ENCODE measurements at regions of chr13 and their contacts with region 1.

Region 1: DNA sequence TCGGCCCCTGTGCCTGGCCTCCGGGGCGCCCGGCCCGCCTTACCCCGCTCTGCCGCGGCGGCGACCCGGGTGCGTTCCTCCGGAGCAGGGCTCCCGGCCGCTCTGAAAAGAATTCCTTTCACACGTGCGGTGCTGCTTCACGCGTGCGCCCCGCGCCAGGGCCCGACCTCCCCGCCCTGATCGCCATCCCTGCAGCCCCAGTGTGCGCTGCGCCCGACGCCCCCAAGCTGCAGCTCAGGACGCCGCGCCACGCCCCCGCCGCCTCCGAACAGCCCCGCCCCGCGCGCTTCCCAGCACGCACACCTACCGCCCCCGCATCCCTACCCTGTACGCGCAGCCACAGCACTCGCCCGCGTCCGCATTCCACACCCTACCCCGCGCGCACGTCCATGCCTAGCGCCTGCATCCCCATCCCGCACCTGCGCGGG is at the start of gene GJA3:
- DNase-seq: peak in 4 of 5 donors; percentile 26 to 37 (median 32)
- H3K4me3 ChIP-seq: peak within 1 kb of the TSS in 1 of 2 donors; percentile 37
- H3K4me3 Mint-ChIP-seq: peak within 1 kb of the TSS; percentile 75 to 88 (median 85)
- H3K27ac ChIP-seq: no peak within 1 kb of the TSS
- H3K27ac Mint-ChIP-seq: peak within 1 kb of the TSS in 4 of 7 donors; percentile 36 to 85 (median 56)
- H3K4me1 ChIP-seq: peaks cover 19% of the 10 kb centered on the region
- H3K4me1 Mint-ChIP-seq: peaks cover 7 to 24% (median 17%) of the 10 kb centered on the region in 4 donors
- H3K27me3 ChIP-seq: peaks cover 11% of the 10 kb centered on the region
- H3K27me3 Mint-ChIP-seq: peaks cover 25 to 41% of the 10 kb centered on the region in 2 donors
- total RNA-seq, gene GJA3: 0.09 TPM in 1 of 2 experiments, not detected in the other

Region 2: DNA sequence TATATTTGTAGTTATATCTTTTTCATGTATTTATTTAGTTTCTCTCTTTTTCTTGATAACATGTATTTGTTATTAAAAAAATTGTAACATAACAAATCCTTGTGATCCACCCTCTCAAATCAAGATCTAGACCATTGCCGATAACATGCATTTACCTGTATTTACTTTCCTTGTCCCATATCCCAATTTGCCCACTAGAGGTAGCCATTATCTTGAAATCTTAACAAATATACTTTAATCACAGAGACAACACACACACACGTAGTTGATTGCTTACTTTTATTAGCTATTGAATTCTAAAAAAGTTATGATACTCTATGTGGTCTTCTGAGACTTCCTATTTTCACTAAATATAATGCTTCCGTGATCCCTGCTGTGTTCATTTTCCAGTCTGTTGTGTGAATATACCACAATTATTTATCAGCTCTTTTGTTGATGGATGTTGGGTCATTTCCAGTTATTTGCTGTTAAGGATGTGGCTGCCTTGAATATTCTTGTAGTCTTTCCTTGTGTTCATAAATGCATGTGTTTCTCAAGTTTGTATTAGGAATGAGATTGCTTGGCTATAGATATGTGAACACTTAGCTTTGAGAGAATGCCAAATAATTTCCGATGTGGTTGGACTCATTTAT is 233.6 kb before region 1 on chr13:
- CTCF ChIA-PET with region 1: interaction called, 6 read pairs
- POLR2A ChIA-PET with region 1: no interaction called
- intact Hi-C with region 1: loop called (anchors 1 kb)
- DNase-seq: peak in 4 of 5 donors; percentile 26 to 37 (median 29)
- H3K4me3 ChIP-seq: no peak overlapping the region
- H3K4me3 Mint-ChIP-seq: no peak overlapping the region
- H3K27ac ChIP-seq: no peak overlapping the region
- H3K27ac Mint-ChIP-seq: peak overlapping the region in 1 of 7 donors; percentile 76
- H3K4me1 ChIP-seq: no peaks in the 10 kb centered on the region
- H3K4me1 Mint-ChIP-seq: peaks cover 0 to 5% (median 4%) of the 10 kb centered on the region in 4 donors
- H3K27me3 ChIP-seq: no peaks in the 10 kb centered on the region
- H3K27me3 Mint-ChIP-seq: no peaks in the 10 kb centered on the region

Region 3: DNA sequence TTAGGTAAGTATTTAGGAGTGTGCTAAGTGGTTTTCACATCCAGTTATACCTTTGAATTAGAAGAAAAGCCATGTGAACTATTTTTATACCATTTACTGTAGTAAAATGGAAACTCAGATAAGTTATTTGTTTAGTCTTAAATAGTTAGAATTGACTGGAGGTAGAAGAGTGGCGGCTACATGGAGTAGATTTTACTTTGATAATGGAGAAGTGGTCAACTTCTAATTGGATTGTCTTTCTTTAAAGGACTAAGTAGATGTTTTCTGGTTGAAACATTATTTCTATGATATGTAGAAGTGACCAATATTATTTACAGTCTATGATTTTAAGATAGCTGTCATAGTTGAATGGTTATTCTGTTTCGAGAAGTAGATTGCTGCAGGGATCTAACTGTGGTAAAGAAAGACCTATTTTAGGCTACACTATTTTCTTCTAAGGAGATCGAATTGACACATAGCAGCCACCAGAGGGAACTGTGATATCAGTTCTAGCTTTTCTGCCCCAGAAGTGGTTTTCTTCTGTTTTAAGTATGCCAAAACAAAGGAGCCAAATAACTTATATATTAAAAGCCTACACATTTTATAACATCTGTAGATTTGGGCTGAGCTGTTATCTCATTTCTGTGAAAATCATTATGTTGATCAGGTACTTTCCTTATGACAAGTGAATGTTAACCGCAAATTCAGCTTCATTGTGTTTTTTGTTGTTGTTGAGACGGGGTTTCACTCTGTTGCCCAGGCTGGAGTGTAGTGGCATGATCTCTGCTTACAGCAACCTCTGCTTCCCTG is 176.2 kb before region 1 on chr13:
- CTCF ChIA-PET with region 1: interaction called, 7 read pairs
- POLR2A ChIA-PET with region 1: interaction called, 3 read pairs
- intact Hi-C with region 1: loop called (anchors 1 kb)
- DNase-seq: peak; percentile 20 to 58 (median 27)
- H3K4me3 ChIP-seq: no peak overlapping the region
- H3K4me3 Mint-ChIP-seq: peak overlapping the region in 3 of 8 donors; percentile 5 to 20 (median 9)
- H3K27ac ChIP-seq: peak overlapping the region; percentile 3
- H3K27ac Mint-ChIP-seq: peak overlapping the region; percentile 9 to 83 (median 62)
- H3K4me1 ChIP-seq: peaks cover 29% of the 10 kb centered on the region
- H3K4me1 Mint-ChIP-seq: peaks cover 24 to 59% (median 35%) of the 10 kb centered on the region in 4 donors
- H3K27me3 ChIP-seq: no peaks in the 10 kb centered on the region
- H3K27me3 Mint-ChIP-seq: no peaks in the 10 kb centered on the region

Region 4: GRCh38 chr13:20090349-20090748 is 70.5 kb before region 1 on chr13:
- CTCF ChIA-PET with region 1: interaction called, 9 read pairs
- POLR2A ChIA-PET with region 1: no interaction called
- intact Hi-C with region 1: loop called (anchors 1 kb)
- DNase-seq: peak in 1 of 5 donors; percentile 9
- H3K4me3 ChIP-seq: no peak overlapping the region
- H3K4me3 Mint-ChIP-seq: no peak overlapping the region
- H3K27ac ChIP-seq: no peak overlapping the region
- H3K27ac Mint-ChIP-seq: no peak overlapping the region
- H3K4me1 ChIP-seq: no peaks in the 10 kb centered on the region
- H3K4me1 Mint-ChIP-seq: no peaks in the 10 kb centered on the region
- H3K27me3 ChIP-seq: no peaks in the 10 kb centered on the region
- H3K27me3 Mint-ChIP-seq: no peaks in the 10 kb centered on the region

Region 5: DNA sequence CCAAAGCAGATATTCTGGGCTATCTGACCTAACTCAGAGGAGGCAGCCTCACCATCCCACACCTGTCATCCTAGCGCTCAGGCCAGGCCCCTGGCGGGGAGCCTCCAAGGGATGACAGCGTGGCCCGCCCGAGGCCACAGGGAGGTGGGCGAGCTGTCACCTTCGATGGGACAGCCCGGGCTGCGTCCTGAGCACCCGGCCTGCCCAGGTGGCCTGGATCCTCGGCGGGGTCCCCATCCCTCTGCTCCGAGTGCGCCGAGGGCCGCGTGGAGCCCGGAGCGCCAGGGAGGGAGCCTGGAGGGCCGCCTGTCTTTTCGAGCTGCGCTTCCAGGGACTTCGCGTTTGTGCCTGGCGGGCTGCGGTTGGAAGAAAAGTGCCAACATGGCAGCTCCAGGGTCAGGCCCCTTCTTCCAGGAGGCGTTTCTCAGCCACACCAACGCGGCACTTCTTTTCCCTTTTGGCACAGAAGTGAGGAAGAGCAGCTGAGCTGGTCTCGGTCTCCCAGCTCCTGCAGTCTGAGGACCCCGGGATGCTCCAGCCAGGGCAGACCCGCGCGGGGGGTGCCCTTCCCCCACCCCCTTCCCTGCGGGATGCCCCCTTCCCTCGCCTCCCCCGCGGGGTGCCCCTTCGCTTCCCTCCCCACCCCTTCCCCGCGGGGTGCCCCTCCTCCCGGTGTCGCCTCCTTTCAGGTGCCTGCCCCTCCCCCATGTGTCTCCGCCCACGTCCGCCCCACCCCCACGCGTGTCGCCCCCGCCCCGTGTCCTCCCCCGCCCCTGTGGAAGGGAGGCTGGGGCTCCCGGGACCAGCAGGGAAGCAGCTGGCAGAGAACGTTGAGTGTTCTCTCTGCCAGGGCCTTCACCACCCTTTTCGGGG is 42.4 kb before region 1 on chr13:
- CTCF ChIA-PET with region 1: interaction called, 3 read pairs
- POLR2A ChIA-PET with region 1: interaction called, 4 read pairs
- intact Hi-C with region 1: loop called (anchors 2 kb)
- DNase-seq: peak in 2 of 5 donors; percentile 12 to 23
- H3K4me3 ChIP-seq: peak overlapping the region; percentile 57 to 62
- H3K4me3 Mint-ChIP-seq: peak overlapping the region; percentile 87 to 94 (median 91)
- H3K27ac ChIP-seq: peak overlapping the region; percentile 42
- H3K27ac Mint-ChIP-seq: peak overlapping the region; percentile 73 to 98 (median 91)
- H3K4me1 ChIP-seq: peaks cover 20% of the 10 kb centered on the region
- H3K4me1 Mint-ChIP-seq: peaks cover 10 to 27% (median 23%) of the 10 kb centered on the region in 4 donors
- H3K27me3 ChIP-seq: no peaks in the 10 kb centered on the region
- H3K27me3 Mint-ChIP-seq: no peaks in the 10 kb centered on the region

Region 6: DNA sequence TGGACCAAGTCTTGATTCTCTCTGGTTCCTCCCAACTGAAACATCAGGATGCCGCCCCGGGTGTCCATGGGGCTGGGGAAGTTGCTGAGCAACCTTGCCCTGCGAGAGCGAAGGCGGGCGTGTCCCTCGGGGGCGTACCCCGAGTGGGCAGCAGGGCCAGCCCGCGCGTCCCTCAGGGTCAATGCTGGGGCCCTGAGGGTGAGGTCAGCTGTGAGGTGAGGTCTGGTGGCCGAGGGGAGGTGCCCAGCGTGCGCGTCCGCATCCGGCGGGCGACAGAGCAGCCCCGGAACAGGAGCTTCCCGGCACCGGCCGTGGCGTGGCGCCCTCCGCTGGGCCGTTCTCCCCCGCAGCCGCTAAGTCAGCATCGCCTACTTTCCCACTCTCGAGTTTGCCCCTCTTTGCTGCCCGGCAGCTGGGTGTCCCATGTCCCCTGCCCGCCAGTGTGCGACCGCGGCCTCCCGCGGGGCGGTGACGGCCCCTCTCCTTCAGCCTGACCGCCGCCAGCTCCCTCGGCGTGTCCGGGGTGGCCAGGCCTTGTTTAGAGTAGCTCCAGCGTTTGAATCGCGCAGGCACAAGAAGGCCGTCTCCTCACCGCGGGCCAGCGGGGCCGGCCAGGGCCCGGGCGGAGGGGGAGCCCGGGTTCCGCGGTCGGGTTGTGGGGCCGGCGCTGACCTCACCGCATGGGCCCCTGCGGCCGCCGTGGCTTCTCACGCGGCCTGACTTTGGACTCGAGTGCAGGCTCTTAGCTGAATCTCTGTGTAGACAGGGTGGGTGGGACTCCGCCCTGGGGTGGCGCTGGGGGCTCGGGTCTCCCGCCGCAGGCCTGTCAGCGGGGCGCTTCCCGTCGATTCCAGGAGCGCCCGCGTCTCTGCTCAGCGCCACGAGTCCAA is 33.0 kb before region 1 on chr13:
- CTCF ChIA-PET with region 1: interaction called, 16 read pairs
- POLR2A ChIA-PET with region 1: no interaction called
- intact Hi-C with region 1: loop called (anchors 2 kb)
- DNase-seq: peak in 4 of 5 donors; percentile 32 to 48 (median 38)
- H3K4me3 ChIP-seq: peak overlapping the region; percentile 42 to 52
- H3K4me3 Mint-ChIP-seq: peak overlapping the region; percentile 64 to 83 (median 72)
- H3K27ac ChIP-seq: no peak overlapping the region
- H3K27ac Mint-ChIP-seq: peak overlapping the region in 1 of 7 donors; percentile 63
- H3K4me1 ChIP-seq: peaks cover 8% of the 10 kb centered on the region
- H3K4me1 Mint-ChIP-seq: peaks cover 0 to 6% (median 1%) of the 10 kb centered on the region in 4 donors
- H3K27me3 ChIP-seq: peaks cover 15% of the 10 kb centered on the region
- H3K27me3 Mint-ChIP-seq: peaks cover 6 to 19% of the 10 kb centered on the region in 2 donors

Region 7: DNA sequence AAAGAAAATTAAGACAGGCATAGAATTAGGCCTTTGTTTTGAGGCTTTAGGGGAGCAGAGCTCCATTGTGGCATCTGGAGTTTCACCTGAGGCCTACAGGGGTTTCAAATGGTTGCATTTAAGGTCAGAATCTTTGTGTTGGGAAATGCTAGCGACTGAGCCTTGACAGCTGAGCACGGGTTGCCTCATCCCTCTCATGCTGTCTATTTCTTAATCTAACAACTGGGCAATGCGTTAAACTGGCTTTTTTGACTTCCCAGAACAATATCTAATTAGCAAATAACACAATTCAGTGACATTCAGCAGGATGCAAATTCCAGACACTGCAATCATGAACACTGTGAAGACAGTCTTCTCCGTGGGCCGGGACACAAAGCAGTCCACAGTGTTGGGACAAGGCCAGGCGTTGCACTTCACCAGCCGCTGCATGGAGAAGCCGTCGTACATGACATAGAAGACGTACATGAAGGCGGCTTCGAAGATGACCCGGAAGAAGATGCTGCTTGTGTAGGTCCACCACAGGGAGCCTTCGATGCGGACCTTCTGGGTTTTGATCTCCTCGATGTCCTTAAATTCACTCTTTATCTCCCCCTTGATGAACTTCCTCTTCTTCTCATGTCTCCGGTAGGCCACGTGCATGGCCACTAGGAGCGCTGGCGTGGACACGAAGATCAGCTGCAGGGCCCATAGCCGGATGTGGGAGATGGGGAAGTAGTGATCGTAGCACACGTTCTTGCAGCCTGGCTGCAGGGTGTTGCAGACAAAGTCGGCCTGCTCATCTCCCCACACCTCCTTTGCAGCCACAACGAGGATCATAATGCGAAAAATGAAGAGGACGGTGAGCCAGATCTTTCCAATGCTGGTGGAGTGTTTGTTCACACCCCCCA is 28.0 kb after region 1 on chr13:
- CTCF ChIA-PET with region 1: no interaction called
- POLR2A ChIA-PET with region 1: no interaction called
- intact Hi-C with region 1: no loop called
- DNase-seq: no peak
- H3K4me3 ChIP-seq: no peak overlapping the region
- H3K4me3 Mint-ChIP-seq: peak overlapping the region in 1 of 8 donors; percentile 43
- H3K27ac ChIP-seq: no peak overlapping the region
- H3K27ac Mint-ChIP-seq: no peak overlapping the region
- H3K4me1 ChIP-seq: peaks cover 16% of the 10 kb centered on the region
- H3K4me1 Mint-ChIP-seq: peaks cover 4 to 22% (median 6%) of the 10 kb centered on the region in 4 donors
- H3K27me3 ChIP-seq: peaks cover 14% of the 10 kb centered on the region
- H3K27me3 Mint-ChIP-seq: peaks cover 21 to 30% of the 10 kb centered on the region in 2 donors

Region 8: DNA sequence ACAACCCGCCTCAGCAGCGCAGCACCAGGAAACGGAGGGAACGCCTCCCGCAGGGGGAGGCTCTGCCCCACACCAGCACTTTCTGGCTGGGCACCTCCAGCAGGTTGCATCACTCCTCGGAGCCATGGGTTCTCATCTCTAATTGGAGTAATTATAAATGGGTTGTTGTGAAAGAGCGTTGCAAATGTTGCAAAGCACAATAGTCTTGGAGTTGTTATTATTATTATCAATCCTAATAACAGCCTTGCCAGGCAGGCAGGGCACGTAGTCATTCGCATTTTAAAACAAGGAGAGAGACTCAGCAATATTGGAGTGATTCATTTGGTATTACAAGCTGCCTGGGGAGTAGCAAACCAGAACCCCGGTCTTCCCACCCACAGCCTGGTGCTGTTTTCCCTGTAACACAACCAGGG is 179.9 kb after region 1 on chr13:
- CTCF ChIA-PET with region 1: no interaction called
- POLR2A ChIA-PET with region 1: no interaction called
- intact Hi-C with region 1: no loop called
- DNase-seq: no peak
- H3K4me3 ChIP-seq: no peak overlapping the region
- H3K4me3 Mint-ChIP-seq: no peak overlapping the region
- H3K27ac ChIP-seq: no peak overlapping the region
- H3K27ac Mint-ChIP-seq: no peak overlapping the region
- H3K4me1 ChIP-seq: no peaks in the 10 kb centered on the region
- H3K4me1 Mint-ChIP-seq: peaks cover 0 to 9% (median 3%) of the 10 kb centered on the region in 4 donors
- H3K27me3 ChIP-seq: no peaks in the 10 kb centered on the region
- H3K27me3 Mint-ChIP-seq: peaks cover 5% of the 10 kb centered on the region in 2 donors